ENCODE measurements at regions of chr1 and their contacts with region 1.

Region 1: GRCh38 chr1:37602750-37603694 is 7.3 kb upstream of the GNL2 start:
- DNase-seq: no peak
- H3K4me3 ChIP-seq: no peak overlapping the region
- H3K27ac ChIP-seq: no peak overlapping the region
- H3K27me3 ChIP-seq: peaks cover 29% of the 10 kb centered on the region
- CTCF ChIP-seq: peak; percentile 78

Region 2: GRCh38 chr1:37616330-37616729 is 13.3 kb after region 1 on chr1:
- CTCF ChIA-PET with region 1: interaction called, 17 read pairs
- POLR2A ChIA-PET with region 1: no interaction called
- DNase-seq: no peak
- H3K4me3 ChIP-seq: no peak overlapping the region
- H3K27ac ChIP-seq: no peak overlapping the region
- H3K27me3 ChIP-seq: peaks cover 33% of the 10 kb centered on the region
- CTCF ChIP-seq: no peak

Region 3: DNA sequence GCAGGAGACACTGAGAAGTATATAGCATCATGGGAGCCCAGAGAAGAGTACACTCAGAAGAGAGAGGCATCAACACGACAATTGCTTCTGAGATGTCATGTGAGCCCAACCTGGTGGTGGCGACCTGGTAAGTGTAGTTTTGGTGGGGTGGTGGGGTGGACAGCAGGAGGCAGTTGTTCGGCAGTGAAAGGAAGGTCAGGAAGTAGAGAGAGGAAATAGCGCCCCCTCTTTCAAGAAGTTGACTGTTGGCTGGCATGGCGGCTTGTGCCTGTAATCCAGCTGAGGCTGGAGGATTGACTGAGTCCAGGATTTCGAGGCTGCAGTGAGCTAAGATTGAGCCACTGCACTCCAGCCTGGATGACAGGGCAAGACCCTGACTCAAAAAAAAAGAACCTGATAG is 19.1 kb after region 1 on chr1:
- CTCF ChIA-PET with region 1: interaction called, 17 read pairs
- POLR2A ChIA-PET with region 1: no interaction called
- DNase-seq: no peak
- H3K4me3 ChIP-seq: no peak overlapping the region
- H3K27ac ChIP-seq: no peak overlapping the region
- H3K27me3 ChIP-seq: peaks cover 40% of the 10 kb centered on the region
- CTCF ChIP-seq: no peak

Region 4: GRCh38 chr1:37631036-37631435 is 28.0 kb after region 1 on chr1:
- CTCF ChIA-PET with region 1: interaction called, 31 read pairs
- POLR2A ChIA-PET with region 1: interaction called, 3 read pairs
- DNase-seq: no peak
- H3K4me3 ChIP-seq: no peak overlapping the region
- H3K27ac ChIP-seq: no peak overlapping the region
- H3K27me3 ChIP-seq: peaks cover 75% of the 10 kb centered on the region
- CTCF ChIP-seq: no peak

Region 5: DNA sequence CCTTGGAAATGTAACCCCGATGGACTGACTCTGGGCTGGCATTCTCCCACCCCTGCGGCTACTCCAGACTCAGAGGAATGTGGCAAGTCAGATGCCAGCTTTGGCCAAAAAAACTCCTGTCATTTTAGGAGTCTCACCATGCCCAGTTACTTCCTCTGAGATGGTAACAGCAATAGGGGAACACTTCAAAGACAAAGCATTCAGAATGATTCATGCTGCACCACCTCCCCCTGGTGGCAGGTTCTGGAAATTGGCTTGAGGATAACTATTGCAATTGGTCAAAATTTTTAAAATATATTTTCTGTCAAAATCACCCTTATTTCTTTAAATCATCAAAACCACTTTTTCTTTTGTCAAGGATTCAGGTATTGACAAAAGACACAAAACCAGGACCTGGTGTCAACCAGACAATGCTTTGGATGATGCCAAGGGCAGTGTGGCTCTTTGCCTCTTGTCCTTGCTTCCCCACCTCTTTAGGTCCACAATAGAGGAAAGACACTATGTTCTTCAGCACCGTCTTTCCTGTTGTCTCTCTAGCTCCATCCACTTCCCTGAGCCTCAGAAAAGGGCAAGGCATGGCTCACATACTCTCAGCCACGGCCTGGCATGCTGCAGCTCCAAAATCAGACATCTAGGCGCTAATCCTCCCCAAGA is 79.4 kb after region 1 on chr1:
- CTCF ChIA-PET with region 1: interaction called, 378 read pairs
- POLR2A ChIA-PET with region 1: interaction called, 9 read pairs
- DNase-seq: peak; percentile 37
- H3K4me3 ChIP-seq: no peak overlapping the region
- H3K27ac ChIP-seq: no peak overlapping the region
- H3K27me3 ChIP-seq: peaks cover 4% of the 10 kb centered on the region
- CTCF ChIP-seq: peak; percentile 94

Region 6: GRCh38 chr1:37692078-37692833 is 89.2 kb after region 1 on chr1 and contains the start of gene CDCA8:
- CTCF ChIA-PET with region 1: interaction called, 18 read pairs
- POLR2A ChIA-PET with region 1: interaction called, 6 read pairs
- DNase-seq: peak; percentile 95
- H3K4me3 ChIP-seq: peak within 1 kb of the TSS; percentile 99
- H3K27ac ChIP-seq: peak within 1 kb of the TSS; percentile 39
- H3K27me3 ChIP-seq: no peaks in the 10 kb centered on the region
- CTCF ChIP-seq: peak; percentile 70
- polyA plus RNA-seq, gene CDCA8: 7.1 and 9.6 TPM in 2 replicates